BJ (cell line): ENCODE measurements at regions of chr9 and their contacts with region 1.

Region 1: GRCh38 chr9:2839040-2839439 is 4.9 kb downstream of the PUM3 start:
- DNase-seq: no peak
- H3K4me3 ChIP-seq: no peak overlapping the region
- H3K27me3 ChIP-seq: no peaks in the 10 kb centered on the region
- CTCF ChIP-seq: no peak

Region 2: GRCh38 chr9:2916382-2916985 is 77.4 kb after region 1 on chr9:
- CTCF ChIA-PET with region 1: no interaction called
- POLR2A ChIA-PET with region 1: interaction called, 12 read pairs
- DNase-seq: no peak
- H3K4me3 ChIP-seq: no peak overlapping the region
- H3K27me3 ChIP-seq: no peaks in the 10 kb centered on the region; the same call in 1 of the 2 replicates
- CTCF ChIP-seq: no peak